Activated CD8-positive, alpha-beta T cell treated with anti-CD3 and anti-CD28 coated beads for 36 hours (primary cell): ENCODE measurements at regions of chr4 and their contacts with region 1.

Region 1: GRCh38 chr4:47531241-47531953 is 46.3 kb downstream of the ATP10D start:
- DNase-seq: peak; percentile 80
- ATAC-seq: peak; percentile 93
- H3K4me3 Mint-ChIP-seq: no peak overlapping the region
- H3K27ac Mint-ChIP-seq: peak overlapping the region; percentile 64
- H3K4me1 Mint-ChIP-seq: peaks cover 58% of the 10 kb centered on the region
- H3K27me3 Mint-ChIP-seq: no peaks in the 10 kb centered on the region
- CTCF ChIP-seq: no peak

Region 2: GRCh38 chr4:47474799-47475198 is 56.6 kb before region 1 on chr4:
- CTCF ChIA-PET with region 1: no interaction called
- POLR2A ChIA-PET with region 1: no interaction called
- intact Hi-C with region 1: no loop called
- DNase-seq: no peak
- ATAC-seq: no peak
- H3K4me3 Mint-ChIP-seq: no peak overlapping the region
- H3K27ac Mint-ChIP-seq: no peak overlapping the region
- H3K4me1 Mint-ChIP-seq: no peaks in the 10 kb centered on the region
- H3K27me3 Mint-ChIP-seq: no peaks in the 10 kb centered on the region
- CTCF ChIP-seq: no peak

Region 3: GRCh38 chr4:47485047-47485692 is 46.2 kb before region 1 on chr4 and contains the start of gene ATP10D:
- CTCF ChIA-PET with region 1: interaction called, 3 read pairs
- POLR2A ChIA-PET with region 1: interaction called, 3 read pairs
- intact Hi-C with region 1: loop called (anchors 5 kb)
- DNase-seq: peak; percentile 87
- ATAC-seq: peak; percentile 99
- H3K4me3 Mint-ChIP-seq: peak within 1 kb of the TSS; percentile 91
- H3K27ac Mint-ChIP-seq: peak within 1 kb of the TSS; percentile 87
- H3K4me1 Mint-ChIP-seq: peaks cover 19% of the 10 kb centered on the region
- H3K27me3 Mint-ChIP-seq: no peaks in the 10 kb centered on the region
- CTCF ChIP-seq: no peak
- total RNA-seq, gene ATP10D: 4.1 to 4.7 TPM